ENCODE measurements at regions of chr3 and their contacts with region 1.

Region 1: DNA sequence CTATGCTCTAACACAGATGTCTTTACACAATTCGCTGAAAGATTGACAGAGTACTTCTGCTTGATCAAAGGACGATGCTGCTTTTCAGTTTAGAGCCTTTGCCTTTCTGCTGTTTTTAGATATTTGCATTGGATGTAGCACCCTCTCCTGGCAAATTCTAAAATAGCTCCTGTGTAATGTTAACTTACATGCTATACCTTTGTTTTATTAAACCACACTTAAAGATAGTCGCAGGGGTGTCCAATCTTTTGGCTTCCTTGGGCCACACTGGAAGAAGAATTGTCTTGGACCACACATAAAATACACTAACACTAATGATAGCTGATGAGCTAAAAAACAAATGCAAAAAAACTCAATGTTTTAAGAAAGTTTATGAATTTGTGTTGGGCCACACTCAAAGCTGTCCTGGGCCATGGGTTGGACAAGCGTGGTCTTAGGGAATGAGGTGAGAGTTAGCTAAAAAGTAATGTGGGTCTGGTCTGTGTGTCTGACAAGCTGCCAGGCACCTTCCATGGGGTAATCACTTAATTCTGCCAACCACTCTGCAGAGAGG is 62.9 kb downstream of the ATG7 start:
- DNase-seq: no peak
- ATAC-seq: peak; percentile 57 to 74
- H3K4me3 ChIP-seq: no peak overlapping the region
- H3K27ac ChIP-seq: no peak overlapping the region
- H3K4me1 ChIP-seq: no peaks in the 10 kb centered on the region
- H3K27me3 ChIP-seq: no peaks in the 10 kb centered on the region

Region 2: DNA sequence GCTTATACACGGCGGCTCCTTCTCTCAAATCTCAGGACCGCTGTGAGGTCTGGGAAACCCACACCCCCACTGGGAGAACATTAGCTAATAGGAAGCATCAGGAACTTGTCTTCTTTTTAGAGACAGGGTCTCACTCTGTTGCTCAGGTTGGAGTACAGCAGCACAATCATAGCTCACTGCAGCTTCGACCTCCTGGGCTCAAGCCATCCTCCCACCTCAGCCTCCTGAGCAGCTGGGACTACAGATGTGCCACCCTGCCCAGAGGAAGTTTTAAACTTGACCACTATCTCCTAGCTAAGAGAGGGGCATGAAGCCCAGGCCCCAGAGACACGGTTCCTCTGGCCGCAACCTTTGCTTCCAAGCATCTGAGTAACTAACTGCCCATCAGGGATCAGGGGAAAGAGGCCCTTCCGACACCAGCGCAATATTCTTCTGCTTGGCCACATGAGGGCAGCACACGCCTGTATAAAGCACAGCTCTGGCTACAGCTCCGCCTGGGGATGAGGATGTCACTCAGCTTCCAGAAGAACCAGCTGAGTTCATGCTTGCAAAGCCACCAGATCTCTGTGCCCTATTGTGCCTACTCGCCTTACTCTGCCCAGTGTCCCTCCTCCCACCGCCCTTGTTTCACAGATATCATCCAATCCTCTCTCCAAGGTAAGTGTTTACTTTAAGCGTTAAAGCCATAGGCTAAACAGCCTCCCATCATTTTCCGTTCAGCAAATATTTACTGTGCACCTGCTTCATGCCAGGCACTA is 576.6 kb before region 1 on chr3:
- intact Hi-C with region 1: loop called in 1 of 4 experiments (anchors 10 kb)
- DNase-seq: peak; percentile 46 to 76 (median 61)
- ATAC-seq: peak; percentile 79 to 90
- H3K4me3 ChIP-seq: no peak overlapping the region
- H3K27ac ChIP-seq: no peak overlapping the region
- H3K4me1 ChIP-seq: no peaks in the 10 kb centered on the region
- H3K27me3 ChIP-seq: no peaks in the 10 kb centered on the region

Region 3: GRCh38 chr3:11236595-11237461 is 98.3 kb before region 1 on chr3:
- intact Hi-C with region 1: loop called in 2 of 4 experiments (anchors 5 kb)
- DNase-seq: peak; percentile 39 to 84 (median 75)
- ATAC-seq: peak in 1 of 2 donors; percentile 28
- H3K4me3 ChIP-seq: no peak overlapping the region
- H3K27ac ChIP-seq: no peak overlapping the region
- H3K4me1 ChIP-seq: no peaks in the 10 kb centered on the region
- H3K27me3 ChIP-seq: no peaks in the 10 kb centered on the region

Measured in right cardiac atrium (tissue), 5 donors.